B cell (primary cell): ENCODE measurements at regions of chr18 and their contacts with region 1.

Region 1: GRCh38 chr18:58671111-58671631 is at the start of gene MALT1:
- DNase-seq: peak; percentile 94
- ATAC-seq: peak; percentile 86
- H3K4me3 ChIP-seq: peak within 1 kb of the TSS; percentile 84 to 92 (median 87)
- H3K4me3 Mint-ChIP-seq: peak within 1 kb of the TSS; percentile 97
- H3K27ac ChIP-seq: peak within 1 kb of the TSS; percentile 73 to 88
- H3K27ac Mint-ChIP-seq: peak within 1 kb of the TSS; percentile 97
- H3K4me1 ChIP-seq: peaks cover 47 to 48% of the 10 kb centered on the region in 2 donors
- H3K4me1 Mint-ChIP-seq: peaks cover 63% of the 10 kb centered on the region
- H3K27me3 ChIP-seq: no peaks in the 10 kb centered on the region
- H3K27me3 Mint-ChIP-seq: no peaks in the 10 kb centered on the region
- CTCF ChIP-seq: no peak
- total RNA-seq, gene MALT1: 81.2 and 95.6 TPM in 2 replicates

Region 2: DNA sequence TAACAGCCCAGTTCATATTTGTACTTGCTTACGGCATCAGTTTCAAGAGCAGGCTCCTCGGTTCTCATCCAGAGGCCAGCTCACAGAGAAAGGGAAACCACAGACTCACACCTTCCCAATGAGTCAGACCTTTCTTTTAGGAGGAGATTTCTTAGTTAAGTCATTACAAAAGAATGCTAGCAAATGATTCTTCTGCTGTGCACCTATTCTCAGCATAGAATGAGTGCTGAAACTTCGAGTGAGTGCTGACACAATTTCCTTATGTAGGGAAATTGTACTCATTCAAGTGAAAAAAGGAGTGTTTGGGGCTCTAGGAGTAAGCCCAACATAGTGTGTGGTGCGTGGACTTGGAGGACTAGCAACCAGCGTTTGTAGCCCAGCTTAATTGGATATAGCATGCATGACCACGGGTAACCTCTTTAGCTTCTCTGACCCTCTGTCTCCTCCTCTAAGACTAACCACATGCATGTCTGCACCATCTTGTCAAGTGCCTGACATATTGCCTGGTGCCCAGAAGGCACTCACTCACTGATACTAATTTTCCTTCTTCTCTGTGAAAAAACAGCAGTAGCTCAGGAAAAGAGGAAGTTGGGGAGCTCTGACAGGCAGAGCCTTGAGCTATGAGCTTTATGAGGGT is 129.3 kb before region 1 on chr18:
- CTCF ChIA-PET with region 1: interaction called, 12 read pairs
- POLR2A ChIA-PET with region 1: interaction called, 5 read pairs
- intact Hi-C with region 1: no loop called
- DNase-seq: peak; percentile 64
- ATAC-seq: peak; percentile 67
- H3K4me3 ChIP-seq: no peak overlapping the region
- H3K4me3 Mint-ChIP-seq: no peak overlapping the region
- H3K27ac ChIP-seq: no peak overlapping the region
- H3K27ac Mint-ChIP-seq: peak overlapping the region; percentile 26
- H3K4me1 ChIP-seq: peaks cover 37 to 44% of the 10 kb centered on the region in 2 donors
- H3K4me1 Mint-ChIP-seq: peaks cover 54% of the 10 kb centered on the region
- H3K27me3 ChIP-seq: no peaks in the 10 kb centered on the region
- H3K27me3 Mint-ChIP-seq: no peaks in the 10 kb centered on the region
- CTCF ChIP-seq: no peak

Region 3: GRCh38 chr18:58639751-58640427 is 31.3 kb before region 1 on chr18:
- CTCF ChIA-PET with region 1: interaction called, 3 read pairs
- POLR2A ChIA-PET with region 1: interaction called, 5 read pairs
- intact Hi-C with region 1: loop called (anchors 5 kb)
- DNase-seq: peak; percentile 49
- ATAC-seq: peak; percentile 53
- H3K4me3 ChIP-seq: no peak overlapping the region
- H3K4me3 Mint-ChIP-seq: no peak overlapping the region
- H3K27ac ChIP-seq: no peak overlapping the region
- H3K27ac Mint-ChIP-seq: peak overlapping the region; percentile 42
- H3K4me1 ChIP-seq: peaks cover 36% of the 10 kb centered on the region in 2 donors
- H3K4me1 Mint-ChIP-seq: peaks cover 25% of the 10 kb centered on the region
- H3K27me3 ChIP-seq: no peaks in the 10 kb centered on the region
- H3K27me3 Mint-ChIP-seq: no peaks in the 10 kb centered on the region
- CTCF ChIP-seq: no peak

Region 4: DNA sequence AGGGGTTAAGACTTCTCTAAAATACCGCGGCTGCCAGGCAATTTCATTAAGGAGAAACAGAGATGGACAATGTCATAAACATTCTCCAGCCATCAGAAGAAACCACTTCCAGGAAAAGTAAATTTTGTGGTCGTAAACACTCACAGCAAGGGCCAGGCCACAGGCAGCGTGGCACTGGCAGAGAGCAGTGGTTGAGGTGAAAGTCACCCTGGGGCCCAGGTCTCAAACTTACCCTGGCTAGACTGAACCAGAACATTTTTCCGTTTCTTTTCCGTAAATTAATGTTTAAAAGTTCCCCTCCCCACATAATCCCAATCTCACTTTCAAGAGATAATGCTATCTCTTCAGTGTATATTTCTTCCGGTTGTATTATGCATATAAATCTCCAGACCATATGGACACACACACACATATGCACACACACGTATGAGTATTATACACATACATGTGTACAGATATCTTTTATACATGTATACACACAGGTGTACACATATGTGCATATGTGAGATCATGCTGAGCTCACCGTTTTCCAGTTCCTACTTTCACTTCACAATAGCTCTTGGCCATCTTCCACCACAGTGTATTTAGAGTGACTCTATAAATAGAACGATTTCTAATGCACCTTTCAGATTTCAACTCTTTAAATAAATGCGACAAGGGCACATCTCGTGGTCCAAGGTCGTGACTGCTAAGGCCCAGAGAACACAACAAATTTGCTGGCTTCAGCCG is 90.2 kb after region 1 on chr18:
- CTCF ChIA-PET with region 1: interaction called, 26 read pairs
- POLR2A ChIA-PET with region 1: interaction called, 3 read pairs
- intact Hi-C with region 1: loop called (anchors 5 kb)
- DNase-seq: peak; percentile 42
- ATAC-seq: peak; percentile 52
- H3K4me3 ChIP-seq: no peak overlapping the region
- H3K4me3 Mint-ChIP-seq: peak overlapping the region; percentile 24
- H3K27ac ChIP-seq: no peak overlapping the region
- H3K27ac Mint-ChIP-seq: peak overlapping the region; percentile 26
- H3K4me1 ChIP-seq: peaks cover 18 to 29% of the 10 kb centered on the region in 2 donors
- H3K4me1 Mint-ChIP-seq: peaks cover 25% of the 10 kb centered on the region
- H3K27me3 ChIP-seq: peaks cover 0 to 18% (median under 1%) of the 10 kb centered on the region in 4 experiments
- H3K27me3 Mint-ChIP-seq: peaks cover 13% of the 10 kb centered on the region
- CTCF ChIP-seq: no peak

Region 5: GRCh38 chr18:58900015-58900649 is 229.0 kb after region 1 on chr18:
- CTCF ChIA-PET with region 1: no interaction called
- POLR2A ChIA-PET with region 1: no interaction called
- intact Hi-C with region 1: no loop called
- DNase-seq: no peak
- ATAC-seq: no peak
- H3K4me3 ChIP-seq: no peak overlapping the region
- H3K4me3 Mint-ChIP-seq: peak overlapping the region; percentile 41
- H3K27ac ChIP-seq: no peak overlapping the region
- H3K27ac Mint-ChIP-seq: no peak overlapping the region
- H3K4me1 ChIP-seq: peaks cover 53 to 56% of the 10 kb centered on the region in 2 donors
- H3K4me1 Mint-ChIP-seq: peaks cover 68% of the 10 kb centered on the region
- H3K27me3 ChIP-seq: no peaks in the 10 kb centered on the region
- H3K27me3 Mint-ChIP-seq: no peaks in the 10 kb centered on the region
- CTCF ChIP-seq: no peak

Region 6: DNA sequence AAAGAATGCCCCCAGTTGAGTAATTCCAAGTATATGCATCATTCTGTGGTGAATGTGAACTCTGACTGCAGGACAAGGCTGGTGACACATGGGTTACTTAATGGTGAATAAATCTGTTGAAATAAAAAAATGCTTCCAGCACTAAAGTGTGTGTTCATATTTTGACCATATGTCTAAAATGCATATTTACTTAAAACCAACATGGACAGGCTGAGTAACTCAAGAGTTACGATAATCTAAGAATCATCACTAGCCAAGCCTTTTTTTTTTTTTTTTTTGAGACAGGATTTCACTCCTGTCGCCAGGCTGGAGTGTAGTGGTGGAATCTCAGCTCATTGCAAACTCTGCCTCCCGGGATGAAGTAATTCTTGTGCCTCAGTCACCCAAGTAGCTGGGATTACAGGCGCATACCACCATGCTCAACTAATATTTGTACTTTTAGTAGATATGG is 1073.1 kb after region 1 on chr18:
- CTCF ChIA-PET with region 1: no interaction called
- POLR2A ChIA-PET with region 1: no interaction called
- intact Hi-C with region 1: no loop called
- DNase-seq: no peak
- ATAC-seq: no peak
- H3K4me3 ChIP-seq: no peak overlapping the region
- H3K4me3 Mint-ChIP-seq: no peak overlapping the region
- H3K27ac ChIP-seq: no peak overlapping the region
- H3K27ac Mint-ChIP-seq: no peak overlapping the region
- H3K4me1 ChIP-seq: no peaks in the 10 kb centered on the region
- H3K4me1 Mint-ChIP-seq: no peaks in the 10 kb centered on the region
- H3K27me3 ChIP-seq: no peaks in the 10 kb centered on the region
- H3K27me3 Mint-ChIP-seq: peaks cover 15% of the 10 kb centered on the region
- CTCF ChIP-seq: no peak